ENCODE measurements at regions of chr16 and their contacts with region 1.

Region 1: GRCh38 chr16:75471723-75472633 is 7.5 kb upstream of the TMEM170A start:
- DNase-seq: peak in 1 of 2 donors; percentile 64
- ATAC-seq: peak; percentile 76 to 96 (median 94)
- H3K4me3 ChIP-seq: no peak overlapping the region
- H3K27ac ChIP-seq: no peak overlapping the region
- H3K4me1 ChIP-seq: peaks cover 0 to 6% (median 0%) of the 10 kb centered on the region in 9 donors
- H3K27me3 ChIP-seq: no peaks in the 10 kb centered on the region
- CTCF ChIP-seq: peak; percentile 61 to 86 (median 78)

Region 2: GRCh38 chr16:75305364-75306098 is 166.4 kb before region 1 on chr16:
- intact Hi-C with region 1: no loop called
- DNase-seq: peak; percentile 41 to 63
- ATAC-seq: peak; percentile 80 to 94 (median 92)
- H3K4me3 ChIP-seq: peak overlapping the region in 3 of 10 donors; percentile 3 to 5 (median 4)
- H3K27ac ChIP-seq: peak overlapping the region; percentile 57 to 89 (median 83)
- H3K4me1 ChIP-seq: peaks cover 14 to 35% (median 29%) of the 10 kb centered on the region in 9 donors
- H3K27me3 ChIP-seq: peaks cover 0 to 18% (median 0%) of the 10 kb centered on the region in 7 donors
- CTCF ChIP-seq: peak in 1 of 9 donors; percentile 15

Region 3: DNA sequence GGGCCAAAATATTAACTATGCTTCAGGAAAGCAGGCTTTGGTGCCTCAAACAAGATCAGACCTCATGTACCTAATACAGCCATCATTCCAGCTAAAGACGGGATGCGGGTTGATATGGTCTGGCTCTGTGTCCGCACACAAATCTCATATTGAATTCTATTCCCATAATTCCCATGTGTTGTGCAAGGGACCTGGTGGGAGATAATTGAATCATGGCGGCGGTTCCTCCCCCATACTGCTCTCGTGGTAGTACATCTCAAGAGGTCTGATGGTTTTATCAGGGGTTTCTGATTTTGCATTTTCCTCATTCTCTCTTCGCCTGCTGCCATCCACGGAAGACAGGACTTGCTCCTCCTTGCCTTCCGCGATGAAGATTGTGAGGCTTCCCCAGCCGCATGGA is 42.3 kb after region 1 on chr16:
- intact Hi-C with region 1: loop called in 6 of 10 experiments (anchors 1 to 5 kb)
- DNase-seq: no peak
- ATAC-seq: no peak
- H3K4me3 ChIP-seq: no peak overlapping the region
- H3K27ac ChIP-seq: no peak overlapping the region
- H3K4me1 ChIP-seq: peaks cover 0 to 10% (median 7%) of the 10 kb centered on the region in 9 donors
- H3K27me3 ChIP-seq: no peaks in the 10 kb centered on the region
- CTCF ChIP-seq: no peak

Region 4: DNA sequence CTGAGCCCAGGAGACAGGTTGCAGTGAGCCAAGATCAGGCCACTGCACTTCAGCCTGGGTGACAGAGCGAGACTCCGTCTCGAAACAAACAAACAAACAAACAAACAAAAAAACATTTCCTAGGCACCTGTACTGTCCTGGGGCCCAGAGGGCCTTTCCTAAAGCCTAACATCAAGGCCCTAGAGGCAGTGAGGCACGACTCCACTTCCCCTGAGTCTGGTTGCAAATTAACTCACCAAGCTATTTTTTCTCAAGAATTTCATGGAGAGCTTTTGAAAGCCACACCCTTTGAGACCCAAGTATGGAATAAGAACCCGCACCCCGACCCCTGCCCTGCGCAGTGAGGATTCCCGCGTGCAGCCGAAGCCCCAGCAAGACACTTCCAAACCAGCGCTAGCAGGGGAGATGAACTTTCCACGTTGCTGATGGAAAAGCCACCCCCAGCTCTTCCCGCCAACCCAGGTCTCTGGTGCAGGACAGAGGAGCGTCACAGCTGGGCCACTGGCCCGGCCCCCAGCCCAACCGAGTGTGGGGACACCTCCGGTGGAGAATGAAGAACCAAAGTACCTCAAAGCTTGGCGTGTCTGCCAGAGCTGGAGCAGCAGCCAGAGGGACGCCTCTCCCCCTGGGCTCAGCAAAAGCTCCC is 62.7 kb after region 1 on chr16:
- intact Hi-C with region 1: loop called in 1 of 10 experiments (anchors 10 kb)
- DNase-seq: no peak
- ATAC-seq: no peak
- H3K4me3 ChIP-seq: peak overlapping the region in 1 of 10 donors; percentile 11
- H3K27ac ChIP-seq: no peak overlapping the region
- H3K4me1 ChIP-seq: peaks cover 0 to 7% (median 4%) of the 10 kb centered on the region in 9 donors
- H3K27me3 ChIP-seq: no peaks in the 10 kb centered on the region
- CTCF ChIP-seq: no peak

Region 5: DNA sequence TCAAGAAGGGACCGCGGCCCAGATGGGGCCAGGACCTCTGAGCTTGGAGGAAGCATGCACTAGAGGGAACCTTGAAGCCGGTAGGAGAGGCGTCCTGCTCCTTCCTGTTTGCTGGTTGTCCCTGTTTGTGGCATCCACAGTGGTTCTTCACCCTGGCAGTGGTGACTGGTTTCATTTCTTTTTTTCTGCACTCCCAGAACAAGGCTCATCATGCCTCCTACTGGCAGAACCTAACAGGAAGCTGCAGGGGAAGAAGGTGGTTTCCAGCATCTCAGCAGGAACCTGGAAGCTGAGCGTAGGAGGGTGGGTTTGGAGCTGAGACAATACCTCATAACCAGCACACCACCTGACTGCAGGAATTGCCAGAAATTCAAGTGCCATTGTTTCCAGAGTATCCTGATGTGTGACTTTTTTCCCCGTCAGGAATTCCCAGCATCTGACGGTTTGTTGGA is 78.3 kb after region 1 on chr16:
- intact Hi-C with region 1: loop called in 6 of 10 experiments (anchors 2 to 10 kb)
- DNase-seq: peak in 1 of 2 donors; percentile 82
- ATAC-seq: peak; percentile 67 to 90 (median 82)
- H3K4me3 ChIP-seq: peak overlapping the region in 5 of 10 donors; percentile 9 to 36 (median 15)
- H3K27ac ChIP-seq: peak overlapping the region; percentile 18 to 86 (median 77)
- H3K4me1 ChIP-seq: peaks cover 0 to 37% (median 10%) of the 10 kb centered on the region in 9 donors
- H3K27me3 ChIP-seq: no peaks in the 10 kb centered on the region
- CTCF ChIP-seq: peak in 7 of 9 donors; percentile 55 to 73 (median 66)

Region 6: DNA sequence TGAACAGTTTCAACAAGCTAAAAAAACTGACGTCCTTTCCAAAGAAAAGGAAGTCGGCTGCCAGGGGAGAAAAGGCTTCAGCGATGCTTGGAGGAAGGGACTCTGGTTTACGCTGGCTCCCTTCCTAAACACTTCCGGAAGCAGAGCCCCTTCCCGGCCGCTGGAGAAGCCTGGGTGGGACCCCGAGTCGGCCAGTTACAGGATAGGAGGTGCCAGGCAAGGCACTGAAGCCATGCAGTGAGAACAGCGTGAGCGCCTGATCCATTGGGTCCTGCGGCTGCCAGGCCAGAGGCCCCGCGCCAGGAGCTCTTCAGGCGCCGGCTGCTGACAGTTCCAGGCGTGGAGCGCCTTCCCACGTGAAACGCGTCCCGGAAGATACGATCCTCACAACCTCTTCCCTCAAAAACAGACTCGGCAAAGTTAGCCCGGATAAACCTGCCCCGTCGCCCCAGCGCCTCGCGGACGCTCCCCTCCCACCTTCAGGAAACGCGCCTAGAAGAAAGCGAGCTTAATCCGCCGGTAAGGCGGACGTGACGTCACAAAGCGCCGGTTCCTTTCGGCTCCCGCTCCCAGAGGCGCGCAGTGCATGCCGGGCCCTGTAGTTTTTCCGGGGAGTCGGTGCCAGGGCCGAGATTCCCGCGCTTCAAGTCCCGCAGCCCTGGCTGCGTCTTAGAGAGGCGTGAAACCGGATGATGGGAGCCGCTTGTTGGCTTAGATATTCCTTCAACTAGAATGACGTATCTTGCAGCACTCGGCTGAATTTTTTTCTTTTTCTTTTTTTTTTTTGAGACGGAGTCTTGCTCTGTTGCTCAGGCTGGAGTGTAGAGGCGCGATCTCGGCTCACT is 151.0 kb after region 1 on chr16 and contains the start of gene ADAT1:
- intact Hi-C with region 1: loop called in 6 of 10 experiments (anchors 2 to 10 kb)
- DNase-seq: peak; percentile 97 to 98
- ATAC-seq: peak; percentile 97 to 99 (median 98)
- H3K4me3 ChIP-seq: peak within 1 kb of the TSS; percentile 57 to 90 (median 72)
- H3K27ac ChIP-seq: peak within 1 kb of the TSS; percentile 53 to 98 (median 92)
- H3K4me1 ChIP-seq: peaks cover 0 to 39% (median 24%) of the 10 kb centered on the region in 9 donors
- H3K27me3 ChIP-seq: no peaks in the 10 kb centered on the region
- CTCF ChIP-seq: peak in 1 of 9 donors; percentile 15
- total RNA-seq, gene ADAT1: 14.3 to 30.6 (median 23.3) TPM

Measured in heart right ventricle (tissue), 16 donors.